A549 (cell line): ENCODE measurements at regions of chr17 and their contacts with region 1.

Region 1: GRCh38 chr17:48520631-48521079 is 10.2 kb downstream of the HOXB1 start:
- DNase-seq: peak in 1 of 2 experiments; percentile 84
- ATAC-seq: peak in 1 of 2 experiments; percentile 39; a peak in 3 of 6 replicates
- H3K4me3 ChIP-seq: no peak overlapping the region
- H3K27ac ChIP-seq: peak overlapping the region; percentile 77 to 80
- H3K4me1 ChIP-seq: peaks cover 57% of the 10 kb centered on the region
- CTCF ChIP-seq: no peak
- EP300 ChIP-seq: no peak
- POLR2A ChIP-seq: no peak
- RAD21 ChIP-seq: no peak

Region 2: DNA sequence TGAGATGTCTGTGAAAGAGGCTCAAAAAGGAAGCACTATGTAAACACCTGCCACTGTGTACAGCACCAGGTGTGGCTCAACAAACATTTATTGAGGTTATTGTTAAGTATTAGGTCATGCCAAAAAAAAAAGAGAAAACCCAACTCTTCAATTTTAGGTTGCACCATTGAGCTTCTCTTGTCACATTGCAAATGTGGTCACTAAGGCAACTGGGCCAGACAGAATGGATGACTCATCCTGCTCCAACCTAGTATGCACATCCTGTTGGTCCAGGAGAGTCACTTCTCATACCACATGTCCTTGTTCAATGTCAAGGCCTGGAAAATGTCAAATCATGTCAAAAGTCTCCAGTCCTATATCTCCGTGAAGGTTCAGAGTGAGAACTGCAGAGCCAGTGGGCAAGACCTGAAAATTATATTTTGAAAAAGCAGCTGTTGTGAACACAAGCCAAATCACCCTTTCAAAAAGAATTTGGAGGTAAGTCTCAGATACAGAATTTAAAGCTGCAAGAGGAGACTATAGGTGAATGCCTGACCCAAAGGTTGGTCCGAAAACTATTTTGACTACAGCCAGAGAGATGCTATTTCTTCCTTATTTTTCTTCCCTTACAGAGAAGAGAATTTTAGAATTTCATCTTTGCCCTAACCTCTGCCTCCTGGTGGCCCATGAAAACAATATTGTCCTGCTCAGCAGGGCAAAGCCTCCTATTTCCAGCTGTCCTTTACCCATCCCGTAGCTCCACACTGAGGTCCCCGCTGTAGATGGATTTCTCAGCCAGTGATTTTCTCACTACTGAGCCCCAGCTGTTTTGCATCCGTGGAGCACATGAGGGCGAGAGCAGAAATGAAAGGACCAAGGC is 14.6 kb before region 1 on chr17:
- CTCF ChIA-PET with region 1: interaction called, 10 read pairs
- POLR2A ChIA-PET with region 1: interaction called, 7 read pairs
- DNase-seq: peak; percentile 78 to 89
- ATAC-seq: peak; percentile 86 to 94
- H3K4me3 ChIP-seq: no peak overlapping the region
- H3K27ac ChIP-seq: peak overlapping the region; percentile 16 to 47
- H3K4me1 ChIP-seq: peaks cover 24% of the 10 kb centered on the region
- CTCF ChIP-seq: no peak; the same call in 2 of the 3 replicates
- EP300 ChIP-seq: no peak
- POLR2A ChIP-seq: no peak
- RAD21 ChIP-seq: no peak; a peak in 1 of 5 replicates